Left ventricle myocardium inferior (tissue), 1 donor: ENCODE measurements at regions of chr7 and their contacts with region 1.

Region 1: GRCh38 chr7:25389489-25390106 is 161.3 kb upstream of the NPVF start:
- DNase-seq: no peak
- H3K4me3 ChIP-seq: no peak overlapping the region
- H3K27ac ChIP-seq: no peak overlapping the region
- H3K4me1 ChIP-seq: peaks cover 19% of the 10 kb centered on the region
- H3K27me3 ChIP-seq: peaks cover 13% of the 10 kb centered on the region
- CTCF ChIP-seq: peak; percentile 64

Region 2: DNA sequence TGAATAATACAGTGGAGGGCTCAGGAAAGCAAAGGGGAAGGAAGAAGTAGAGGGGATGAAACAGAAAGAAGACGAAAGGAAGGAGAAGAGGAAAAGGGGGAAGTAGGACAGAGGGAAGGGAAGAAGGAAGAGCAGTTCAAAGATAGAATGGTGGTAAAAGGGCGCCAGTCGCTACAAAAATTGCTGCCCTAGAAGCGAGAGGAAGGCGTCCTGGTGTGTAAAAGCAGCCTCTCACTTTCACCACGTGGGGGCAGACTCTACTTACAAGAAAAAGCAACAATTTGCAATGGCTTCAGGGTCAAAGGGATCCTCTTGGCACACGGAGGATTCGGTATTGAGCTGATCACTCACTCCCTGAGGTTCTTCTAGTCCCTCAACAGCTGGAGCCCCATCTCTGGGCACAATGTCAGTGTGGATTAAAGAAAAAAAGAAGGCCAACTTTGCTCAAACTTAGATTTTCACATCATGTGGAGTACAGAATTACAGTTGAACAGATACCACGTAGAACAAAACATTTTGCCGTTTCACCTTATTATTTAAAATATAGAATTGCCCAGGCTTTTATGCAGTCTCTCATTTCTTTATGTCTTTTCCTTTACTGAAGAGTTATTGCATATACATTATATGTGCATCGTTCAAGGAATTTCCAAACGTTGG is 129.9 kb before region 1 on chr7:
- intact Hi-C with region 1: loop called (anchors 5 kb)
- DNase-seq: peak; percentile 41
- H3K4me3 ChIP-seq: no peak overlapping the region
- H3K27ac ChIP-seq: no peak overlapping the region
- H3K4me1 ChIP-seq: peaks cover 8% of the 10 kb centered on the region
- H3K27me3 ChIP-seq: peaks cover 10% of the 10 kb centered on the region
- CTCF ChIP-seq: peak; percentile 88

Region 3: DNA sequence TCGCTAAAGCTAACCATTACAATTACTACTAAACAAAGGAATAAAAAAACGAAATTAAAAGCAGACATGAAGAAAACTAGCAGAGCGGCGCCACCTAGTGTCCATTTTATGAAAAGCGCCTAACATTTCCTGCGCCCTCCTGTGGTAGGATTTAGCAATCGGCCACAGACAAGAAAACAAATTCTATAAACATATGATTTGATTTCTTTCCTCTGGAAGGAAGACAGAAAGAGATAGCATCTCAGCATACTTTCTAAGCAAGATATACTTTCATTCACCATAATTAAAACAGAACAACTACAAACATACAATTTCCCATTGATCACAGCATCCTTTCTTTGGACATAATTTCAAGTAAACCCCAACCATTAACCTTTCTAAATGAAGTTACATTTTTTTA is 176.4 kb after region 1 on chr7:
- intact Hi-C with region 1: loop called (anchors 2 kb)
- DNase-seq: no peak
- H3K4me3 ChIP-seq: no peak overlapping the region
- H3K27ac ChIP-seq: no peak overlapping the region
- H3K4me1 ChIP-seq: peaks cover 5% of the 10 kb centered on the region
- H3K27me3 ChIP-seq: peaks cover 14% of the 10 kb centered on the region
- CTCF ChIP-seq: peak; percentile 100